ENCODE measurements at regions of chr12 and their contacts with region 1.

Region 1: DNA sequence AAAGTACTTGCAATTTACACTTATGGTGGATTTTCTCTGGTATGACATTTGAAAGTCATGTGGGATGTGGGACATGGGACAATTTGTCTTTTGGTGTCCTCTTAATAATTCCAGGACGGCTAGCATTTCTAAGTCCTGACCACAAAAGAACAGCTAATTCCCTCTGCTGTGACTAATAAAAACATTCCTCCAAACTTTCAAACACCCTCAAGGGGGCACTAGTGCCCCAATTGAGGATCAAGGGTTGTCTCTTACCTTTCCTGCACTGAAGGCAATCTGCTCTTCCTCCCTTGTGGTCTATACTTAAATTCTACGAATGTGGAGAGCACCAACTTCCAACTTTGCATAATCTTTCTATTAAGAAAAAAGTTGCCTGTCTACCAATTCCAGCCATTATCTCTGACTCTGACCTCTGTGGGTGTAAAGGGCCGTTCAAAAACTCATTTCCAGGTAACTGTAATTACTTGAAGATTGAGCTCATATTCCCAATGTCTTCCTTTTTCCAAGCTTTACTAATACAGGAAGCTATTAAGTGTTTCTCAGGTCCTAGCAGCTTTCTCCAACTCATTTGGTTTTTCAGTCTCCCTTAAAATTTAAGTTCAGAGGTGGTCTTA is 210.2 kb downstream of the PTPRO start:
- DNase-seq: no peak
- ATAC-seq: peak; percentile 60
- H3K4me3 ChIP-seq: no peak overlapping the region
- H3K27ac ChIP-seq: no peak overlapping the region
- H3K4me1 ChIP-seq: no peaks in the 10 kb centered on the region
- H3K27me3 ChIP-seq: no peaks in the 10 kb centered on the region

Region 2: GRCh38 chr12:15584366-15585041 is 52.0 kb after region 1 on chr12:
- intact Hi-C with region 1: loop called in 3 of 4 experiments (anchors 5 to 10 kb)
- DNase-seq: no peak
- ATAC-seq: no peak
- H3K4me3 ChIP-seq: no peak overlapping the region
- H3K27ac ChIP-seq: no peak overlapping the region
- H3K4me1 ChIP-seq: no peaks in the 10 kb centered on the region
- H3K27me3 ChIP-seq: no peaks in the 10 kb centered on the region